ENCODE measurements at regions of chr15 and their contacts with region 1.

Region 1: DNA sequence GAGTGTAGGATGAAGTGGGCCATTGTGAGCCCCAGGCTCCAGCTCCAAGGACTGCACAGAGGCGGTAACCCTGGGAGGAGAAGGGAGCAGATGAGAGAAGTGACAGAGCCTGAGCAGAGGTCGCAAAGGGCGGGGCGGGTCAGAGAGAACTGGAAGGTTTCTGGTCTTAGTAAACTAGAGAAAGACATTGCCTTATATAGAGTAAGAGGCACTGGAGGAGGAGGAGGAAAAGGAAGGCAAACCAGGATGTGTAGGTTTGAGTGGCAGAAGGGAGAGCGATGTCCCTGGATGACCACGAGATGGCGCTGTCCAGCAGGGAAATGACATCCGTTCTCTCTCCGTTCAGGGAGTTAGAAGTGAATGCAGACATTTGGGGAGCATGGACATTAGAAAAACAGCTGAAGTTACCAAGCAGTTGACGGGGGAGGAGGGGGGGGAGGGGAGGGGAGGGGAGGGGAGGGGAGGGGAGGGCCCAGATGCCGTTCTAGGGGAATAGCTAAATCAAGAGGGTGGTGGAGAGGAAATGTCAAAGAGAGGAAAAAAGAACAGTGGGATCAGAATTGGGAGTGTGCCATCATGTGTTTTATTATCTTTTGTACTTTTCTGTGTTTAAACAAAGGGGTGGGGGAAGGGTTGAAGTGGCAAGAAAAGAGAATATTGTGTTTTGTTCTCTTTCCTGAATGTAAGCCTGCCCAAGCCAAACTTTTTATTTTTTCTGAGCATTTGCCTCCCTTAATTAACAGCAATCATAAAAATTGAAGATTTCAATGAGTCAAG is 48.8 kb downstream of the STARD5 start:
- DNase-seq: peak; percentile 76
- CTCF ChIP-seq: peak; percentile 93

Region 2: GRCh38 chr15:80890341-80891005 is 384.6 kb before region 1 on chr15:
- CTCF ChIA-PET with region 1: no interaction called
- POLR2A ChIA-PET with region 1: no interaction called
- DNase-seq: no peak
- CTCF ChIP-seq: no peak

Region 3: DNA sequence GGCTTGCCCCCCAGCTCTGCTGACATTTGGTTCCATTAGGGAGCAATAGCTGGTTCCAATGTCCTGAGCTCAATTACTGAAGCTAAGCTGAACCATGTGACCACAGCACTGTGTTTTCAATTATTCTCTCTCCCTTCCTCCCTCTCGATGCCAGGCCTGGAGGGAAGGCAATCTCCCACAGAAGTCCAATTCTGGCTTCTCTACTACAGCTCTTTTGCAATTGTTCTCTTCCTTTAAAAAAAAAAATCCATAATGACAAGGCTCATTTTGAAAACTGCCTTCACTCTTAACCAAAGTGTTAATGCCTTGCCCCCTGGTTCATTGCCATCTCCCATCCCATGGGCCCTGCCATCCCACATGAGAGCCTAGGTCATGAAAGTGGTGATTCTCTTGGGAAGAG is 53.7 kb before region 1 on chr15:
- CTCF ChIA-PET with region 1: no interaction called
- POLR2A ChIA-PET with region 1: no interaction called
- DNase-seq: no peak
- CTCF ChIP-seq: no peak

Region 4: DNA sequence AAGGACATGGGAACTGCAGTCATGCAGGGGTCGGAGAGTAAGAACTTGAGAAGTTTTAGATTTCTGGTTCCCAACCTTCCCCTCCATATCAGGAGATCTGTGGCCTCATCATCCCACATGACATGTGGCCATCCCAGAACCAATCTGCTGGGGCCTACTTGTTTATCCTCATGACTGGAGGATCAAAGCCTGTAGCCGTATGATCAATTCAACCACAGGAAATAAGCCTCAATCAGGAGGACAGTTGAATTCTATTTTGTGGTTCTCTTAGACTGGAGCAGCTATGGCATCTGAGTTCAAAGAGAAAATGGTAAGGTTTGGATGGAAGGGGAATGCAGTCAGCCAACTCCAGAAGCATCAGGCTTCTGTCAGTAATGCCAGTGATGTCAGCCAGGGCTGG is 21.3 kb before region 1 on chr15:
- CTCF ChIA-PET with region 1: no interaction called
- POLR2A ChIA-PET with region 1: no interaction called
- DNase-seq: no peak
- CTCF ChIP-seq: no peak

Region 5: GRCh38 chr15:81296673-81297072 is 21.6 kb after region 1 on chr15:
- CTCF ChIA-PET with region 1: interaction called, 73 read pairs
- POLR2A ChIA-PET with region 1: no interaction called
- DNase-seq: peak; percentile 67
- CTCF ChIP-seq: no peak

Region 6: GRCh38 chr15:81323944-81324881 is 49.1 kb after region 1 on chr15 and contains the start of gene STARD5:
- CTCF ChIA-PET with region 1: interaction called, 10 read pairs
- POLR2A ChIA-PET with region 1: no interaction called
- DNase-seq: peak; percentile 98
- CTCF ChIP-seq: no peak

Region 7: DNA sequence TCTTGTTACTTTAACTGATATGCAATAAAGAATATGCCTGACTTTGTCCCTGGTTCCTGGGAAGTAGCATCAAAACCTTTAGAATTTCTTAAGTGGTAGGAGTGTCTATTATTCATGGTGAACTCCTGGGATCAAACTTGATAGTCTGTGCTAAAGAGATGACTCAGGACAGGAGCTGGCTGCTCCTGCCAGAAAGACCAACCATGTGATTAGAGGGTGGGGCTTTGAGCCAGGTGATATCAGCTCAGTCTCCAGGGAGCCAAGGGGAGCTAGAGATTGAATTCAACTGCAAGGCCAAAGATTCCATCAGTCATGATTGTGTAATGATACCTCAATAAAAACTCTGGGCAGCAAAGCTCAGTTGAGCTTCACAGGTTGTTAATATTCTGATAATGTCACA is 119.5 kb after region 1 on chr15:
- CTCF ChIA-PET with region 1: interaction called, 52 read pairs
- POLR2A ChIA-PET with region 1: no interaction called
- DNase-seq: no peak
- CTCF ChIP-seq: no peak

Region 8: DNA sequence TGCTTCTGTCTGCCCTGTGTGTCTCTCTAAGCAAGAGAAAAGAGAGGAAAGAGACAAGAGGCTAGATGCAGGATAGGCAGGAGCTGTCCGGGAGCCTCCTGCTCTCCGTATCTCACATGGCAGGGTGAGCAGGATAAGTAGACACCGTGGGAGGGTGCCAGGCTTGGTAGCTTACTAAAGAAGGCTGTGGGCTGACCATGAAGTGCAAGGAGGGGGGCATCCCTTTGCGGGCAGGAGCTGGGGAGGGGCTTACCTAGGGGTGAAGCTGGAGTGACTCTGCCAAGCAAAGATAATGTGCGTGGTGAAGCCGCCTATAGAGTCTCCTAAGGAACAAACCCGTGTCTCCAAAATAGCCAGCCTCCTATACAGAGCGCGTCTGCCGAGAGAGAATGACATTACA is 132.6 kb after region 1 on chr15:
- CTCF ChIA-PET with region 1: interaction called, 52 read pairs
- POLR2A ChIA-PET with region 1: no interaction called
- DNase-seq: no peak
- CTCF ChIP-seq: no peak

Measured in GM10248 (cell line).